Transverse colon (tissue), 4 donors: ENCODE measurements at regions of chr4 and their contacts with region 1.

Region 1: DNA sequence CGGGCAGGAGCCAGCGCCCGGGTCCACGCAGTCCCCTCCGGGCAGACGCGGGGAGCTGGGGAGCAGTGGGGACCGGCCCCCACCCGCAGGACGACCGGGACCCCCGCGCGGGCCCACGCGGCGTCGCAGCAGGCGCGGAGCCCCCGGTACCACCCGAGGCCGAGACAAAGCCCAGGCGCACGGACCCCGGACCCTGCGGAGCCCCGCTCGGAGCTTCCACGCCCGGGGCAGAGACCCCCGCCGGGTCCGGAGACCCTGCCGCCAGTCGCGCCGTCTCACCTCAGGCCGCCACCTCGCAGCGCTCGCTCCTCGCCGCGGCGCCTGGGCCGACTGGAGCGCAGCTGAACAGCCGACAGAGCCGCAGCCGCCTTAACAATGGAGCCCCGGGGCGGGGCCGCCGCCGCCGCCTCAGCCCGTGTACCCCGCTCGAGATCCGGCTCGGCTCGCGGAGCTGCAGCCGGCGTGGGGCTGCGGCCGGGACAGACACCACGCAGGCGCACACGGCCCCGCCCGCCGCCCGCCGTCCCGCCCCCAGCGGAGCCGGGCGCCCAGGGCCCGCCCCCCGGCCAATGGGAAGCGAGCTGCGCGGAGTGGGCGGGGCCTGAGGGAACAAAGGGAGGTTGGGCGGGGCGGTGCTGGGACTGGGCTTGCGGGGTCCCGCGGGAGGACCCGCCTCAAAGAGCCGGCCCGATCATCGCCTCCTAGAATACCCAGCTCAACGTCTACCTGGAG is at the start of gene AFAP1:
- DNase-seq: peak; percentile 91
- H3K4me3 ChIP-seq: peak within 1 kb of the TSS; percentile 51 to 95 (median 70)
- H3K27ac ChIP-seq: peak within 1 kb of the TSS; percentile 93 to 98 (median 96)
- H3K4me1 ChIP-seq: peaks cover 2 to 43% (median 20%) of the 10 kb centered on the region in 4 donors
- H3K27me3 ChIP-seq: no peaks in the 10 kb centered on the region
- CTCF ChIP-seq: no peak
- EP300 ChIP-seq: no peak
- POLR2A ChIP-seq: peak; percentile 86
- total RNA-seq, gene AFAP1: 25.1 to 56.9 (median 26.4) TPM

Region 2: GRCh38 chr4:7770224-7771050 is 169.1 kb before region 1 on chr4:
- in situ Hi-C with region 1: no loop called
- intact Hi-C with region 1: loop called (anchors 10 kb)
- DNase-seq: no peak
- H3K4me3 ChIP-seq: no peak overlapping the region
- H3K27ac ChIP-seq: no peak overlapping the region
- H3K4me1 ChIP-seq: peaks cover 10 to 40% (median 22%) of the 10 kb centered on the region in 4 donors
- H3K27me3 ChIP-seq: no peaks in the 10 kb centered on the region
- CTCF ChIP-seq: peak; percentile 22 to 44 (median 34)
- EP300 ChIP-seq: no peak
- POLR2A ChIP-seq: no peak

Region 3: DNA sequence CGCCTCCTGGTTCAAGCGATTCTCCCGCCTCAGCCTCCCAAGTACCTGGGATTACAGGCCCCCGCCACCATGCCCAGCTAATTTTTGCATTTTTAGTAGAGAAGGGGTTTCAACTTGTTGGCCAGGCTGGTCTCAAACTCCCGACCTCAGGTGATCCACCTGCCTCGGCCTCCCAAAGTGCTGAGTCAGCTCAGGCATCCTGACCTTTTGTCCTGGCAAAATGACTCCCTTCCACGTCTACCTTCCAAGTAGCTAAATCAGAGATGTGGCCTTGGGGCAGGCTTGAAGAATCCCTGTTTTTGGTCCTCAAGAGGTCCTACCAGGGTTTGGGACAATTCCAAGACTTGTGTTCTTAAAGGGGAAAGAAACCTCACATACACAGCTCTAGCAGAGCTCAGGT is 12.7 kb before region 1 on chr4:
- in situ Hi-C with region 1: no loop called
- intact Hi-C with region 1: loop called (anchors 1 kb)
- DNase-seq: no peak
- H3K4me3 ChIP-seq: no peak overlapping the region
- H3K27ac ChIP-seq: no peak overlapping the region
- H3K4me1 ChIP-seq: peaks cover 6 to 39% (median 23%) of the 10 kb centered on the region in 4 donors
- H3K27me3 ChIP-seq: no peaks in the 10 kb centered on the region
- CTCF ChIP-seq: no peak
- EP300 ChIP-seq: no peak
- POLR2A ChIP-seq: no peak